SK-N-SH (cell line): ENCODE measurements at regions of chr2 and their contacts with region 1.

Region 1: GRCh38 chr2:133780099-133780839 is 212.0 kb upstream of the NCKAP5 start:
- DNase-seq: peak; percentile 48
- H3K4me3 ChIP-seq: no peak overlapping the region
- H3K27ac ChIP-seq: no peak overlapping the region
- H3K4me1 ChIP-seq: peaks cover 0 to 13% of the 10 kb centered on the region in 2 experiments; a peak in 2 of 4 replicates
- H3K27me3 ChIP-seq: no peaks in the 10 kb centered on the region
- CTCF ChIP-seq: peak; percentile 91
- EP300 ChIP-seq: no peak
- RAD21 ChIP-seq: peak; percentile 93

Region 2: DNA sequence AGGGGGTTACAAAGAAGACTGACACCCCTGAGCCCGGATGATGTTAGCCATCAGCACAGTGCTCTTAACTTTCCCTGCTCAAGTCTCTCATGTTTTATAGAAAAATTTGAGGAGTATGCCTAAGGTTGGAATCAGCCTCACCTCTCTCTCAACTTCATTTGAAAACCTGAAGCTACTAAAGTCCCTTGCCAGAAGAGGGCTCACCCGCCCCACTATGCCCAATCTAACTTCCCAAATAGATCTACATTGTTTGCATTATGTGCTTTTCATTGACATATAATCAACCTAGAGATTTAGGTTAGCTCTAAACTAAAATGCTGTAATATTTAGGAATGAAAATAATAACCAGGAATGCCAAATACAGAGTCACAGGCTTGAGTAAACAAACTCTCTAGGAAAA is 517.4 kb before region 1 on chr2:
- CTCF ChIA-PET with region 1: interaction called, 12 read pairs
- POLR2A ChIA-PET with region 1: no interaction called
- DNase-seq: no peak
- H3K4me3 ChIP-seq: no peak overlapping the region
- H3K27ac ChIP-seq: no peak overlapping the region
- H3K4me1 ChIP-seq: peaks cover 0 to 14% of the 10 kb centered on the region in 2 experiments; a peak in 2 of 4 replicates
- H3K27me3 ChIP-seq: no peaks in the 10 kb centered on the region
- CTCF ChIP-seq: peak; percentile 48
- EP300 ChIP-seq: no peak
- RAD21 ChIP-seq: peak; percentile 65

Region 3: DNA sequence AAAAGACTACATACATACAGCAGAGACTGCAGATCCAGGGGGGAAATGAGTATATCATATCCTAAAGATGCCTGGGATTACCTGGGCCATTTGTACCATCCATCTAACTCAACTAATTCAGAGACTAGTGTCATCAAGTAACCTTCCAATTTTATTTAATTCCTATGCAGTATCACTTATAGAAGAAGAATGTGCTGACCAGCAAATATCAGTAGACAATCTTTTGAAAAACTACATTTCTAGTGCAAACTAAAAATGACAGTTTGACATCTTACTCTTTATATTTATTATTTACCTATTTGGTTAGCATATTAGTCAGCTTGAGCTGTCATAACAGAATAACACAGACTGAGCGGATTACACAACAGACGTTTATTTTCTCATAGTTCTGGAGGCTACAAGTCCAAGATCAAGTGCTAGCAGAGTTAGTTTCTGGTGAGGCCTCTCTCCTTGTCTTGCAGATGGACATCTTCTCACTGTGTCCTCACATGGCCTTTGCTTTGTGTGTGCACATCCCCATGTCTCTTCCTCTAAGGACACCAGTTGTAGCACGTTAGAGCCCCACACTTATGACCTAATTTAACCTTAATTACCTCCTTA is 259.0 kb before region 1 on chr2:
- CTCF ChIA-PET with region 1: interaction called, 22 read pairs
- POLR2A ChIA-PET with region 1: no interaction called
- DNase-seq: no peak
- H3K4me3 ChIP-seq: no peak overlapping the region
- H3K27ac ChIP-seq: no peak overlapping the region
- H3K4me1 ChIP-seq: peaks cover 0 to 28% of the 10 kb centered on the region in 2 experiments; a peak in 1 of 4 replicates
- H3K27me3 ChIP-seq: no peaks in the 10 kb centered on the region
- CTCF ChIP-seq: no peak
- EP300 ChIP-seq: no peak
- RAD21 ChIP-seq: no peak

Region 4: GRCh38 chr2:133765658-133766057 is 14.6 kb before region 1 on chr2:
- CTCF ChIA-PET with region 1: interaction called, 15 read pairs
- POLR2A ChIA-PET with region 1: no interaction called
- DNase-seq: no peak
- H3K4me3 ChIP-seq: no peak overlapping the region
- H3K27ac ChIP-seq: no peak overlapping the region
- H3K4me1 ChIP-seq: no peaks in the 10 kb centered on the region
- H3K27me3 ChIP-seq: no peaks in the 10 kb centered on the region
- CTCF ChIP-seq: no peak
- EP300 ChIP-seq: no peak
- RAD21 ChIP-seq: no peak

Region 5: DNA sequence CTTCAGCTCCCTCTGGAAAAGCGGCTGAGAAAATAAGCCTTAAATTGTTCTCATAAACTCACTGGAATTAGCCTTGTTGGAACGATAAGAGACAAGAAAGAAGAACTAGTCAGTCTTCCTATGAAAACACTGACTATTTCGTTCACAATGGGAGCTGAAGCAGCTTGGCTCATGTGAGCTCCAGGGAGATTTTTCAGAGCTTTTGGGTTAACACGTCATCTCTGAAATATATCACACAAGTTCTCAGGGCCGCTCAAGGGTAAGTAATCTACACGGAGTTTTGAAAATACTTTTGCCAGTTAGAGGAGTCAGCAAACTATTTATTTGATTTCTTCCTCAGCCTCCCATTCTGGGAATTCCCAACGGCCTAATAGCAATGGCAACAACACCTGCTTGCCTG is 157.4 kb after region 1 on chr2:
- CTCF ChIA-PET with region 1: no interaction called
- POLR2A ChIA-PET with region 1: no interaction called
- DNase-seq: no peak
- H3K4me3 ChIP-seq: no peak overlapping the region
- H3K27ac ChIP-seq: no peak overlapping the region
- H3K4me1 ChIP-seq: no peaks in the 10 kb centered on the region
- H3K27me3 ChIP-seq: no peaks in the 10 kb centered on the region
- CTCF ChIP-seq: no peak
- EP300 ChIP-seq: no peak
- RAD21 ChIP-seq: no peak